ENCODE measurements at regions of chr18 and their contacts with region 1.

Region 1: GRCh38 chr18:34661464-34662111 is 48.5 kb upstream of the DTNA start:
- DNase-seq: no peak
- ATAC-seq: peak; percentile 54
- H3K4me3 Mint-ChIP-seq: peak overlapping the region; percentile 24
- H3K27ac Mint-ChIP-seq: peak overlapping the region; percentile 99
- H3K4me1 Mint-ChIP-seq: peaks cover 56% of the 10 kb centered on the region
- H3K27me3 Mint-ChIP-seq: no peaks in the 10 kb centered on the region
- CTCF ChIP-seq: peak; percentile 72

Region 2: DNA sequence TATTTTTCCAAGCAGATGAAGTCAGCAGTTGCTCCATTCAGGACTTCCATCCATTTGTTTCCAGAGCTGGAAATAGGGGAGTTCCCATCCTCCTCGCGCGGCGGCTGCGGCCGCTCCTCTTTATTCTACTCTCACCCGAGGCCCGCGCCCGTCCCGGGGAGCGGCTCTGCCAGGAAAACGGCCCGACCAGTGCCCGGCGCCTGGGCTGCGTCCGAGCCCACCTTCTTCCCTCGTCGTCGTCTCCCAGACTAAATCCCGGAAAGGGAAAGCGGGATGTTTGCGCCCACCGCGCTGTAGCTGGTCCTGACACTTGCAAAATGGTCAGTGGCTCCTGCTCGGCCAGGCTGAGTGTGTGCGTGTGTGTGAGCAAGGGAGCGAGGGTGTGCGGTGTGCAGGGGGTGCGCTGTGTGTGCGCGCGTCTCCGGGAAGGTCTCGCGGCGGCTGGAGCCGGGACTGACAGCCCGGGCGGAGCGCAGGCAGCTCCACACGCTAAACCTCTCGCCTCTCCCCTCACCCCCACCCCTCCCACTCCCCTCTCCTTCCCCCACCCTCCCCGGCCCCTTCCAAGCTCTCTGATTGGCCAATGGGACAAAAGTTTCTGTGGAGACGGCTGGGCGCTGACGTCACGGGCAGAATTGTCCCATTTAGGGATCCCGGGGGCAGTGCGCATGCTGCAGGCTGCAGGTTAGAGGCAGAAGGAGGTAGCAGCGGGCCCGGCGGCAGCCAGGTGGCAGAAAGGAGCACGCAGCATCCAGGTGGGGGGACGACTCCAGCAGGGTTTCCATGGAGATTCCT is 437.0 kb before region 1 on chr18 and contains the start of gene NOL4:
- CTCF ChIA-PET with region 1: interaction called, 11 read pairs
- POLR2A ChIA-PET with region 1: no interaction called
- DNase-seq: peak; percentile 99
- ATAC-seq: peak; percentile 82
- H3K4me3 Mint-ChIP-seq: peak within 1 kb of the TSS; percentile 82
- H3K27ac Mint-ChIP-seq: no peak within 1 kb of the TSS
- H3K4me1 Mint-ChIP-seq: peaks cover 19% of the 10 kb centered on the region
- H3K27me3 Mint-ChIP-seq: peaks cover 51% of the 10 kb centered on the region
- CTCF ChIP-seq: 0 out of 2 replicates have a peak, but pooled peaks have one; percentile 32
- total RNA-seq, gene NOL4: 0.57 to 1.4 TPM (median 1.2 TPM) in 3 replicates

Region 3: DNA sequence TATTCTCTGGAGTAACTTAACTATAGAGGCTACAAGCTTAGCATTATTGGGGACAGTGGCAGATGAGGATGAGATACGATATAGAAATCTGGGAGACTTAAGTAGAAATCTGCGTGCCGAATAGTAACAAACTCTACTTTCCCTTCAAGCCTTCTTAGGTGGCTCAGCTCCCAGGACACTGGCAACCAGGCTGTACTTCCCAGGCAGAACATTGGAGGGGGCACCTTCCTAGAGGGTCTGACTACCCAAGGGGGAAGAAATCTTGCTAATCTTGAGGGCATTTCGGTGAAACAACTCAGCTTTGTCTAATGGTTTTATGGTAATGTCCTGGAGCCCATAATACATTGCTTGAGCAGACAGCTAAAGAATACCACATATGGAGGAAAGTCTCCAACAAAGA is 77.7 kb before region 1 on chr18:
- CTCF ChIA-PET with region 1: interaction called, 17 read pairs
- POLR2A ChIA-PET with region 1: no interaction called
- DNase-seq: no peak
- ATAC-seq: peak; percentile 91
- H3K4me3 Mint-ChIP-seq: no peak overlapping the region
- H3K27ac Mint-ChIP-seq: no peak overlapping the region
- H3K4me1 Mint-ChIP-seq: peaks cover 17% of the 10 kb centered on the region
- H3K27me3 Mint-ChIP-seq: no peaks in the 10 kb centered on the region
- CTCF ChIP-seq: no peak

Region 4: GRCh38 chr18:34631560-34631959 is 30.0 kb before region 1 on chr18:
- CTCF ChIA-PET with region 1: interaction called, 22 read pairs
- POLR2A ChIA-PET with region 1: no interaction called
- DNase-seq: no peak
- ATAC-seq: no peak
- H3K4me3 Mint-ChIP-seq: no peak overlapping the region
- H3K27ac Mint-ChIP-seq: no peak overlapping the region
- H3K4me1 Mint-ChIP-seq: peaks cover 18% of the 10 kb centered on the region
- H3K27me3 Mint-ChIP-seq: no peaks in the 10 kb centered on the region
- CTCF ChIP-seq: no peak

Region 5: DNA sequence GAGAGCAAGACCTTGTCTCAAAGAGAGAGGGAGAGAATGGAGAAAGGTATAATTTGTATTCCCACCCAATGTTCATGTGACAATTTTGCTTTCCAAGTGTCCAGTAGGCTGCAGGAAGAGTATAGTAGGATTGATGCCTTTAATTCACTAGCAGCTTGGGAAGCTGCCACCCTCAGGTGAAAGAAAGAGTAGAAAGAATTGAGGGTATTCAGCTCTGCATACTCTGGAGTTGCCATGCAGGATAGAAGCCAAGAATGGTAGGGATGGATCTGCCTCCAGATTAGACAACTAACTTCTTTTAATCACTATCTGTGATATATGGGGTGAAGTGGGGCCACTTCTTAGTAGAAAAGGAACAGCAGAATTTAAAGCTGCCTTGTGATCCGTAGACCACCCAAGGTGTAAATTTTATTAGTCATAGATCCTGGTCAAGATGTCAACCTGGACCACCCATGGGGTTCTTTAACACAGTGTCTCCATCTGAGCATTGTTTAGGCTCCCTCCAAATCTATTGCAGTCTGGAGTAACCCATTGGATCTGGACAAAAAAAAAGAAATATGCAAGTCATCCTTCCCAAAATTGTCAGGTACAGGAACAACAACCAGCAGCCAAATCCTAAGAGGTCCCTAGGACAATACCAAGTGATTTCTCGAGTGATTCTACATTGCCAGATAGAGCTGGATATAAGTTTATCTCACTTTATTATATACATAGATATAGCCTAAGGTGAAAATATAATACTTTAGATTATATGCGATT is 15.4 kb after region 1 on chr18:
- CTCF ChIA-PET with region 1: interaction called, 27 read pairs
- POLR2A ChIA-PET with region 1: interaction called, 3 read pairs
- DNase-seq: no peak
- ATAC-seq: peak; percentile 47
- H3K4me3 Mint-ChIP-seq: no peak overlapping the region
- H3K27ac Mint-ChIP-seq: no peak overlapping the region
- H3K4me1 Mint-ChIP-seq: 0 out of 2 replicates have a peak, but pooled peaks cover 4% of the 10 kb centered on the region
- H3K27me3 Mint-ChIP-seq: no peaks in the 10 kb centered on the region
- CTCF ChIP-seq: no peak

Region 6: GRCh38 chr18:34729264-34729663 is 67.7 kb after region 1 on chr18:
- CTCF ChIA-PET with region 1: interaction called, 20 read pairs
- POLR2A ChIA-PET with region 1: no interaction called
- DNase-seq: peak; percentile 45
- ATAC-seq: peak; percentile 92
- H3K4me3 Mint-ChIP-seq: no peak overlapping the region
- H3K27ac Mint-ChIP-seq: no peak overlapping the region
- H3K4me1 Mint-ChIP-seq: peaks cover 21% of the 10 kb centered on the region
- H3K27me3 Mint-ChIP-seq: no peaks in the 10 kb centered on the region
- CTCF ChIP-seq: peak; percentile 31; the same call in 1 of the 2 replicates

Region 7: GRCh38 chr18:34809451-34810072 is 148.0 kb after region 1 on chr18:
- CTCF ChIA-PET with region 1: interaction called, 19 read pairs
- POLR2A ChIA-PET with region 1: no interaction called
- DNase-seq: peak; percentile 75
- ATAC-seq: peak; percentile 71
- H3K4me3 Mint-ChIP-seq: no peak overlapping the region
- H3K27ac Mint-ChIP-seq: no peak overlapping the region
- H3K4me1 Mint-ChIP-seq: peaks cover 6% of the 10 kb centered on the region
- H3K27me3 Mint-ChIP-seq: no peaks in the 10 kb centered on the region
- CTCF ChIP-seq: peak; percentile 65

Measured in WTC11 (cell line).